Panc1 (cell line): ENCODE measurements at regions of chr3 and their contacts with region 1.

Region 1: DNA sequence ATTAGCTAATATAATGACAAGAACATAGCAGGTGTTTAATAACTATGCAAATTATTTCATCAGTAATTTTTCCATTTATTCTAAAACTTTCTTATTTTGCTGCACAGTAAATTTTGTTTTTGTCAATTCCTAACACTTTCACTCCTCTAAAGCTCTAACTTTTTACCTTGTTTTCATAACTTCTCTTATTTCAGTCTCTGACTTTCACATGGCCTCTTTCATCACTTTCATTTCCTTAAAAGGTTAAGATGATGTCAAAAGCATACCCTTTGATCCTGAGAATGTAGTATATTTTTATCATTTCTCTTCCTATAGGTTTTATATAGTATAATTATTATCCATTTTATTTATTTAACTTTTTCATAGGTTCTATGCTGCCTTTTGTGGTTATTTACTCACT is 1325.8 kb upstream of the ALCAM start:
- DNase-seq: no peak
- ATAC-seq: no peak
- H3K4me3 ChIP-seq: no peak overlapping the region
- H3K27ac ChIP-seq: no peak overlapping the region
- H3K4me1 ChIP-seq: no peaks in the 10 kb centered on the region
- H3K27me3 ChIP-seq: no peaks in the 10 kb centered on the region
- CTCF ChIP-seq: no peak

Region 2: GRCh38 chr3:103813957-103814356 is 226.9 kb before region 1 on chr3:
- CTCF ChIA-PET with region 1: no interaction called
- POLR2A ChIA-PET with region 1: interaction called, 11 read pairs
- in situ Hi-C with region 1: no loop called
- intact Hi-C with region 1: no loop called
- DNase-seq: no peak
- ATAC-seq: no peak
- H3K4me3 ChIP-seq: no peak overlapping the region
- H3K27ac ChIP-seq: no peak overlapping the region
- H3K4me1 ChIP-seq: no peaks in the 10 kb centered on the region
- H3K27me3 ChIP-seq: no peaks in the 10 kb centered on the region
- CTCF ChIP-seq: no peak